Activated CD4-positive, alpha-beta memory T cell treated with anti-CD3 and anti-CD28 coated beads for 36 hours (primary cell): ENCODE measurements at regions of chr7 and their contacts with region 1.

Region 1: DNA sequence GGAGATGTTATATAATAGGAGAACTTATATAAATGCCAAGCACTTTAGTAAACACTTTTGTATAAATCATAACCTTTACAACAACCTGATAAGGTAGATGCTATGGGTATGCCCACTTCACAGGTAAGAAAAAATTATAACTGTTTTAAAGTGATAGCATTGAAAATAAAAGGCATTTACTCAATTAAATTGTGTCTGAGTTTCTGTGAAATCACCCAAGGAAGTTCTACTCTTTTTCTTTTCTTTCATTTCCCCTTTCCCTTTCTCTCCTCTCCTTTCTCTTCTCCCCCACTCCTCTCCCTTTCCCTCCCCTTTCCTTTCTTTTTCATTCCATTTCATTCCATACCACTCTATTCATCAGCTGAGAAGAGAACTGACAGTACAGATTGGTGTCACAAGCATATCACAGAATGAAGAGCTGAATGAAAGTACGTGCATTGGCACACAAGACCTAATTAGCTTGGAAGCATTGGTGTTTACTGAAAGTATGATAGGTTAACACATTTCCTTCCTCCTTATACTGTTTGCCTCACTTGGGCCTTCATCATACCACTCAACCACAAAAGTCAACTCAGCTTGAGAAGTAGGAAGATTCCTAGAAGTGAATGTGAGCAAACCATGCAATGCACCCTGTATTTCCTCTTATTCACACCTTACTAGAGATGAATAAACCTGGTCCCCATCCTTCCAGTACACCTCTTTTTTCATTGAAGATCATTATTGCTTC is 117.9 kb upstream of the AGR3 start:
- DNase-seq: no peak
- H3K4me3 Mint-ChIP-seq: no peak overlapping the region
- H3K27ac Mint-ChIP-seq: peak overlapping the region; percentile 56
- H3K4me1 Mint-ChIP-seq: peaks cover 8% of the 10 kb centered on the region
- H3K27me3 Mint-ChIP-seq: no peaks in the 10 kb centered on the region

Region 2: GRCh38 chr7:16982640-16983350 is 16.9 kb before region 1 on chr7:
- CTCF ChIA-PET with region 1: interaction called, 21 read pairs
- POLR2A ChIA-PET with region 1: no interaction called
- intact Hi-C with region 1: no loop called
- DNase-seq: peak; percentile 34
- H3K4me3 Mint-ChIP-seq: no peak overlapping the region
- H3K27ac Mint-ChIP-seq: no peak overlapping the region
- H3K4me1 Mint-ChIP-seq: peaks cover 2% of the 10 kb centered on the region
- H3K27me3 Mint-ChIP-seq: peaks cover 4% of the 10 kb centered on the region

Region 3: DNA sequence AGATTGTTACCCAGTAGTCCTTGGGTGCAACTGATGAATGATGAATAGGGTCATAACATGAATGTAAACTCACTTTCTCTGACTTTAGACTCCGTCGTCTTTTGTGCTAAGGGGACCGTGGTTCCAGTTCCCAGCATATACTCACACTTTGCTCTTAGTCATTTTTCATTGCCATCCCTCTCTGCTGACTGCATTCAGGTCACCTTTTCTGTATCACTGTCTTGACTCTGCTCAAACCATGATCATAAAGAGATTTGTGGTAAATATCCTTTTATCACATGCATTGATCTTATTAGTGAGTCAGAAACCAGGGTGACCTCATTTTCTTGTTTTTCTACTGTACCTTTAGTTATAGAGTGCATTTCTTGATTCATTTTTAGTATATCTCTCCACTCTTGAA is 23.2 kb after region 1 on chr7:
- CTCF ChIA-PET with region 1: no interaction called
- POLR2A ChIA-PET with region 1: no interaction called
- intact Hi-C with region 1: loop called (anchors 1 kb)
- DNase-seq: peak; percentile 60
- H3K4me3 Mint-ChIP-seq: no peak overlapping the region
- H3K27ac Mint-ChIP-seq: peak overlapping the region; percentile 7
- H3K4me1 Mint-ChIP-seq: peaks cover 17% of the 10 kb centered on the region
- H3K27me3 Mint-ChIP-seq: peaks cover 1% of the 10 kb centered on the region

Region 4: GRCh38 chr7:17139081-17139480 is 139.4 kb after region 1 on chr7:
- CTCF ChIA-PET with region 1: no interaction called
- POLR2A ChIA-PET with region 1: no interaction called
- intact Hi-C with region 1: loop called (anchors 1 kb)
- DNase-seq: no peak
- H3K4me3 Mint-ChIP-seq: no peak overlapping the region
- H3K27ac Mint-ChIP-seq: peak overlapping the region; percentile 82
- H3K4me1 Mint-ChIP-seq: peaks cover 70% of the 10 kb centered on the region
- H3K27me3 Mint-ChIP-seq: no peaks in the 10 kb centered on the region